Common myeloid progenitor, CD34-positive (primary cell): ENCODE measurements at regions of chr2 and their contacts with region 1.

Region 1: DNA sequence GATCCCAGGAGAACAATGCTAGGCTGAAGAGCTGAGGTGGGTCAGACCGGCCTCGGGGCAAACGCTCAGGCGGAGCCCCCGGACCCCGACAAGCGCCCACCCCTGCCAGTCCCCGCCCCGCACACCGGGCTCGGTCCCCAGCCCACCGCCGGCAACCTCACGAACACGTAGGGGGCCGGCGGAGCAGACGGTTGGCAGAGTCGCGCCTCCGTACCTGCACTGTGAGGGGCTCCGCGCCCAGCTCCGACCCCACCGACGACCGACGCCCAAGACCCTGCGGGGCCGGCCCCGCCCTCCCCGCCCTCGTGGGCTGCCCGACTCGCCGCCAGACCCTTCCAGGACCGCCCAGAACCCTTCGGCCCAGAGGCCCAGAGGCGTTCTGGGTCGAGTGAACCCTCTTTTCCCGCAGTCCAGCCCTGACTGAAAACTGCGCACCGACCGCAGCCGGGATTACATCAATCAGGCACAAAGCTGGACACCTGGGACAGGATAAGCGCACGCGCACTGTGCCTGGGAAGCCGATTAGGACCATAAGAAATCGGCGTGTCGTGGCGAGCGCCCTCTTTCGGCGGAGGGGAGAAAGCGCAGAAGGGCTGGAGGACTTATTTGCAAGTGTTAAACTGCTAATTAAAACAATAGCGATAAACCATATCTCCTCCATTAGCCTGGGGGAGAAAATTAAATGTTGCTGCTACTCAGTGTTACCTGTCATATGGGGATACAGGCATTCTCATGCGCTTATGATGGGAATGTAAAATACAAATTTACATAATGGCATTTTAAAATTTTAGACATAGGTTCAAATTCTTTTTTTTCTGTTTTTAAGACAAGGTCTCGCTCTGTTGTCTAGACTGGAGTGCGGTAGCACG is 11.7 kb upstream of the DCTN1 start:
- DNase-seq: peak; percentile 95 to 97 (median 96)
- H3K4me3 ChIP-seq: peak overlapping the region; percentile 70 to 98 (median 90)
- H3K27ac ChIP-seq: peak overlapping the region; percentile 97 to 98
- H3K4me1 ChIP-seq: peaks cover 11 to 19% (median 14%) of the 10 kb centered on the region in 4 experiments
- H3K27me3 ChIP-seq: no peaks in the 10 kb centered on the region

Region 2: DNA sequence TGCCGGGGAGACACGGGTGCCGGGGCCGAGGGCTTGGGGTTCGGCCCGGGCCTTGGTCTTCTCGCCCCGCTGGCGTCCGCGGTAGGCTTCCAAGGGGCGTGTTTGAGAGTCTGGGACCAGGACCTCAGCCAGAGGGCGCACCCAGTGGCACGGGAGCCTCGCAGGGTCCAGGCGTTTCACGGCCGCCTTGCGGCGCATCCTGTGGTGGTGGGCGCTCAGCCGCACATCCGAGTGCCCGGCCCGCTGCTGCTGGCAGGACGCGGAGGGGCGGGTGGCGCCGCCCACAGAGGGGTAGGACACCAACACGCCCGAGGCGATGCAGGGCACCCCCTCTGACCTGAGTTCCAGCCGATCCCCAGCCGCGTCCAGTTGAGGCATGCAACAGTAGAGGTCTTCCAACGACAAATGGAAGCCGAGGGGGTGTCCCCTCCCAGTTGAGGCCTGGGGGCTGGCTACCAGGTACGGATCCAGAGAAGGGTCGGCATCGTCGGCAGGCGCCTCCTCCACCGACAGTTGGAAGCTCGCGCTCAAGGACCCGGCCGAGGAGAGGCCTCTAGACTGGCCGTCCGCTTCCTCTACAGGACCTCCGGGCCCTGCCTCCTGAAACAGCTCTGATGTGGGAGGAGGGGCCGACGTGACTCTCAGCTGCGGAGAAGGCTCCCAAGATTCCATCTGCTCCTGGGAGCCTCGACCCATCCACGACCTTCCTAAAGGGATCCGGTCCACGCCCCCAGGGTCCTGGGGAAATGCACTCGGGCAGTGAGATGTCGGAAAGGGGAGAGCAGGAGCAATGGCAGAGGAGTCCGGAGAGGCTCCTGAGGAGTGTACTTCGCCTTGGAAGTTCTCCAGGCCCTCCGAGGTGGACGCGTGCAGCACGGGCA is 23.3 kb after region 1 on chr2:
- CTCF ChIA-PET with region 1: interaction called, 10 read pairs
- POLR2A ChIA-PET with region 1: no interaction called
- DNase-seq: peak; percentile 46 to 62 (median 51)
- H3K4me3 ChIP-seq: peak overlapping the region in 6 of 7 experiments; percentile 10 to 82 (median 64)
- H3K27ac ChIP-seq: no peak overlapping the region
- H3K4me1 ChIP-seq: peaks cover 0 to 33% (median 25%) of the 10 kb centered on the region in 4 experiments
- H3K27me3 ChIP-seq: peaks cover 0 to 7% (median 0%) of the 10 kb centered on the region in 5 experiments